Aorta (tissue), 5 donors: ENCODE measurements at regions of chr2 and their contacts with region 1.

Region 1: GRCh38 chr2:181790716-181791649 is 100.5 kb upstream of the ITPRID2 start:
- DNase-seq: no peak
- ATAC-seq: no peak
- H3K4me3 ChIP-seq: no peak overlapping the region
- H3K27ac ChIP-seq: no peak overlapping the region
- H3K4me1 ChIP-seq: no peaks in the 10 kb centered on the region
- H3K27me3 ChIP-seq: no peaks in the 10 kb centered on the region

Region 2: DNA sequence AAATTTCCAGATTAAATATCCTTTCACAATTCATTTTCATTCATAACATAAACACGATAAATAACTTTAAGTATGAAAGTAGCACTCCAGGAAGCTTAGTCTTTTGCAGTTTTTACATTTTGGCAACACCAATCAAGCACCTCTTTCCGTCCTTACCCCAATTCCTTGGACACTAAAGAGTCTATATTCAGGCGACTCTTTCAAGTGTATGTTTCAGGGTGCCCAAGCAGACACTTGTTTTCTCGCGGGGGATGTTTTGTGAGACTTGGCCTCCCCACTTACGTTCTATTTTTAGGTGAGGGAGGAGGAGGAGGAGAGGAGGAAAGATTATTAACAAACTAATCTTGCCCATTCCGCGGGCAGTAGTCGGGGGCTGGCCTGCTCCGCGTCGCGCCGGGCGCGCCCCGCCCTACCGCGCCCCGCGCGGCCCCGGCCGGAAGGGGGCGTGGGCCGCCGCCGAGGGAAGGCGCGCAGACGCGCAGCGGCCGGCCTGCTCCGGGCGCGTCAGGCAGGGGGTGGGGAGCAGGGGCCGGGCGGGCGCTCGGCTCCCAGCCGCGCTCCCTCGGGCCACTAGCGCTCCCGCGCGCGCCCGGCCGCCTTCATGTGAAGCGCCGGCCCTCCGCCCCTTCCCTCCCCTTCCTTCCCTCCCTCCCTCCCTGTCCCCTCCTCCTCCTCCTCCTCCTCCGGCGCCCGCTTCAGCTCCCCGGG is 100.4 kb after region 1 on chr2 and contains the start of gene ITPRID2:
- intact Hi-C with region 1: loop called in 1 of 2 experiments (anchors 5 kb)
- DNase-seq: peak; percentile 92 to 94
- ATAC-seq: peak; percentile 97
- H3K4me3 ChIP-seq: peak within 1 kb of the TSS; percentile 85 to 86
- H3K27ac ChIP-seq: peak within 1 kb of the TSS; percentile 93 to 95
- H3K4me1 ChIP-seq: peaks cover 0 to 7% of the 10 kb centered on the region in 2 donors
- H3K27me3 ChIP-seq: no peaks in the 10 kb centered on the region
- total RNA-seq, gene ITPRID2: 119 to 145 TPM